ENCODE measurements at regions of chr1 and their contacts with region 1.

Region 1: DNA sequence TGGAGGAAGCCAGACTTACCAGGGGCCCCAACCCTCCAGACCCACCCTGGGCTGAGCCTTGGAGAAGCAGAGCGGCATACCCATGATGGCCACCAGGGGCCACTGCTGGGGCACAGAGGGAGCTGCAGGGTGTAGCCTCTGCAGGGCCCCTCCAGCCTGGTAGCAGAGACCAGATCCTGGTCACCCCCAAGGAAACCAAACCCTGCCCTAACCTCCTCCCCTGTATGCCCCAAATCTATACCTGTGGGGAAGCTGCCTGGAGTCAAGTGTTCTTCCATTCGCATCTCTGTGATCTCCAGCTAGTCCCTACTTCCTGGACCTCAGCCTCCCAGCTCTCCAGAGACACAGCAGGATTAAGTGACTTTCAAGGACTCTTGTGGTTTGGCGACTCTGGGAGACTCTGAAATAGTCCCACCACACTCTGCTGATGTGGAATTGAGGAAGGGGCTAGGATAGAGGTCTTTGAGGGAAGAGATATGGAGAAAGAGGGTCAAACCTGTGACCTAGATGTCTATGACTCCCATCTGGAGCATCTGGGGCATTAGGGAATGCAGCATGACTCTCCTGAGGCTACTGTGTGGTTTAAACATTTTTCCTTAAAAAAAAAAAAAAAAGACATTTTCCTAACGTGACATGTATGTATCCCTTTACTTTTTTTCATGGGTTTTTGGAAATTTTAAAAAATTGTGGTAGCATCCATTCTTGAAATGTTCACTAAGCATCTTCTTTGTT is 119.2 kb upstream of the IPO9 start:
- DNase-seq: peak; percentile 54 to 82
- ATAC-seq: peak; percentile 62 to 80; a peak in 4 of 6 replicates
- H3K4me3 ChIP-seq: no peak overlapping the region
- H3K27ac ChIP-seq: peak overlapping the region; percentile 59 to 95
- H3K4me1 ChIP-seq: peaks cover 43% of the 10 kb centered on the region
- CTCF ChIP-seq: peak; percentile 92
- EP300 ChIP-seq: no peak
- POLR2A ChIP-seq: no peak
- RAD21 ChIP-seq: peak; percentile 95 to 97

Region 2: GRCh38 chr1:201545851-201546492 is 163.8 kb before region 1 on chr1:
- CTCF ChIA-PET with region 1: interaction called, 18 read pairs
- POLR2A ChIA-PET with region 1: interaction called, 4 read pairs
- DNase-seq: peak; percentile 47 to 55
- ATAC-seq: peak; percentile 96 to 98
- H3K4me3 ChIP-seq: no peak overlapping the region
- H3K27ac ChIP-seq: peak overlapping the region in 1 of 2 experiments; percentile 70; a peak in 3 of 6 replicates
- H3K4me1 ChIP-seq: peaks cover 6% of the 10 kb centered on the region; the same call in 1 of the 3 replicates
- CTCF ChIP-seq: no peak; the same call in none of the 3 replicates
- EP300 ChIP-seq: no peak
- POLR2A ChIP-seq: no peak
- RAD21 ChIP-seq: no peak

Region 3: DNA sequence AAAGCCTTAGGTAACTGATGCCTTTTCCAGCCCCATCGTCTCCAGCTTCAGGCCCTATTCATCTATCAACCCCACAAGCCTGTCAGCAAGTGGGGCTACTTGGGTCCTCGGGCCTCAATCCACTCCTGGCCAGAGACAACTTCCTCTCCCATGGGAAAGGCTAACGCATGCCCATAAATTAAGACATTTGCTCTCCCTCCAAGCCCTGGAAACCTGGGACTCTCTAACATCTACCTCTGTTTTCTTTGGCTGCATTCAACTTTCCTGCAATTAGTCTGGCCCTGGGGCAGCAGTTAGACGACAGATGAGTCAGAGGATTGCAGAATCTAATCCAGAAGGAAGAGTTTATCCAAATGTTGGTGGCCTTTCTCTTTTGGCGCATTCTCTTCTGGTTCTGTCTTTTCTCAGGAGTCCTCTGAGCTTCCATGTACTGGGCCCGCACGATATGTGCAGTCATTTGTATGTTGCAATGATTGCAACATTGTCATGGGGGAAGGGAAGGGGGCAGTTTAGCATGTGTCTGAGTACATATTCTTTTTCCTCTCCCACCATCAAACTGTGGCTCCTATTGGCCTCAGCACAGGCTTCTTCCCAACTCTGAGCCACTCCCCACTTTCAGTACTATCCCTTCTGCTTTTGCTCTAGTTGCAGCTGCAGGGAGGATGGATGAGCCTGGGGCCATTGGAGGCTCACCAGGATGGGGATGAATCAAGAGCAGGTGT is 116.4 kb before region 1 on chr1:
- CTCF ChIA-PET with region 1: interaction called, 22 read pairs
- POLR2A ChIA-PET with region 1: no interaction called
- DNase-seq: peak; percentile 28 to 75
- ATAC-seq: peak; percentile 66
- H3K4me3 ChIP-seq: no peak overlapping the region
- H3K27ac ChIP-seq: peak overlapping the region; percentile 81 to 90
- H3K4me1 ChIP-seq: peaks cover 62% of the 10 kb centered on the region
- CTCF ChIP-seq: no peak
- EP300 ChIP-seq: peak; percentile 94 to 95; a peak in 4 of 5 replicates
- POLR2A ChIP-seq: no peak
- RAD21 ChIP-seq: peak in 1 of 2 experiments; percentile 43; a peak in 2 of 5 replicates

Region 4: GRCh38 chr1:201719812-201720521 is 10.2 kb after region 1 on chr1:
- CTCF ChIA-PET with region 1: interaction called, 51 read pairs
- POLR2A ChIA-PET with region 1: no interaction called
- DNase-seq: no peak
- ATAC-seq: no peak
- H3K4me3 ChIP-seq: no peak overlapping the region
- H3K27ac ChIP-seq: peak overlapping the region in 1 of 2 experiments; percentile 42; a peak in 3 of 6 replicates
- H3K4me1 ChIP-seq: peaks cover 29% of the 10 kb centered on the region
- CTCF ChIP-seq: no peak
- EP300 ChIP-seq: no peak
- POLR2A ChIP-seq: no peak
- RAD21 ChIP-seq: no peak

Region 5: GRCh38 chr1:201759194-201759815 is 49.6 kb after region 1 on chr1:
- CTCF ChIA-PET with region 1: interaction called, 11 read pairs
- POLR2A ChIA-PET with region 1: interaction called, 3 read pairs
- DNase-seq: no peak
- ATAC-seq: 0 out of 6 replicates have a peak, but pooled peaks of 1 of the 2 experiments have one; percentile 32
- H3K4me3 ChIP-seq: no peak overlapping the region
- H3K27ac ChIP-seq: no peak overlapping the region
- H3K4me1 ChIP-seq: peaks cover 34% of the 10 kb centered on the region; the same call in 2 of the 3 replicates
- CTCF ChIP-seq: no peak
- EP300 ChIP-seq: no peak
- POLR2A ChIP-seq: no peak
- RAD21 ChIP-seq: no peak

Region 6: DNA sequence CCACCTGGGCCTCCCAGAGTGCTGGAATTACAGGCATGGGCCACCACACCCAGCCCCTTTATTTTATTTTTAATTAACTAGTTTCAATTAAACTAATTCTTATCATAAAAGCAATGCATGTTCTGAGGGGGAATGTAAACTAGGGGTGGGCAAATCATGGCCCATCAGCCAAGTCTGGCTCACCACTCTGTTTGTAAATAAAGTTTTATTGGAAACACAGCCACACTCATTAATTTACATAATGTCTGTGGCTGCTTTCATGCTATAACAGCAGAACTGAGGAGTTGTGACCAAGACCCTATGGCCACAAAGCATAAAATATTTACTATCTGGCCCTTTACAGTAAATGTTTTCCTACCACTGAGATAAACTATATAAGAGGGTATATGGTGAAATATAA is 90.5 kb after region 1 on chr1:
- CTCF ChIA-PET with region 1: interaction called, 903 read pairs
- POLR2A ChIA-PET with region 1: no interaction called
- DNase-seq: no peak
- ATAC-seq: no peak
- H3K4me3 ChIP-seq: no peak overlapping the region
- H3K27ac ChIP-seq: no peak overlapping the region
- H3K4me1 ChIP-seq: 0 out of 3 replicates have a peak, but pooled peaks cover 3% of the 10 kb centered on the region
- CTCF ChIP-seq: no peak
- EP300 ChIP-seq: no peak
- POLR2A ChIP-seq: no peak
- RAD21 ChIP-seq: no peak